Ascending aorta (tissue), 2 donors: ENCODE measurements at regions of chr2 and their contacts with region 1.

Region 1: DNA sequence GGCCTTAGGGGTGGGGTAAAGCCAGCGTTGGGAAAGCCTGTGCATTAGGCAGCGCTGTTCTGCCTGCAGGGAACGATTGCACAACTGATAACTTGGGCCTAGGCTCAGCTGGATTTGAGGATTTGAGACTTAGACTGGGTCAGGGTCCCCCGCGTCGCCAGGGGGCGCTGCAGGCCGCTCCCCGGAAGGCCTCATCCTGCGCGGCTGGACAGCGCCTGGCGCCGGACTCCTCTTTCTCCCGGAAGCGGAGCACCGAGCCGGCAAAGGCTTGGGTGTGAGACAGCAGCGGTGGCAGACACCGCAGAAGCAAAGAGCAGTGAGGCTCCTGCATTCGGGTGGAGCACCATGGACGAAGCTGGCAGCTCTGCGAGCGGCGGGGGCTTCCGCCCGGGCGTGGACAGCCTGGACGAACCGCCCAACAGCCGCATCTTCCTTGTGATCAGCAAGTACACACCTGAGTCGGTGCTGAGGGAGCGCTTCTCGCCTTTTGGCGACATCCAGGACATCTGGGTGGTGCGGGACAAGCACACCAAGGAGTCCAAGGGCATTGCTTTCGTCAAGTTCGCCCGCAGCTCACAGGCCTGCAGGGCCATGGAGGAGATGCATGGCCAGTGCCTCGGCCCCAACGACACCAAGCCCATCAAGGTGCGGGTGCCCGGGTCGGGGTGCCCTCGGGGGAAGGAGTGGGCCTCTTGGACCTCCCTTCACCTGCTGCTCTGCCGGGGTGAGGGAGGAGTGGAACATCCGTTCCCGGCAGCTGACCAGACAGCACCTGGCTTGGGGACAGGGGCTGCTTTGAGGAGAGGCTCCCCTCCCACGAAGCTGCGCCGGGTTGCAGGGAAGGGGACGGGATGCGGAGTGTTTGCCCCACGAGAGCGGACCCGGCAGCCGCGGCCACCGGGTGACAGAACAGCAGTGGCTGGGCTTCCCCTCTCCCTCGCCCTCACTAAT is at the start of gene RBM45:
- DNase-seq: peak; percentile 54 to 96
- H3K4me3 ChIP-seq: peak within 1 kb of the TSS; percentile 84 to 94
- H3K27ac ChIP-seq: peak within 1 kb of the TSS; percentile 66 to 77
- H3K4me1 ChIP-seq: peaks cover 0 to 6% of the 10 kb centered on the region in 2 donors
- H3K27me3 ChIP-seq: no peaks in the 10 kb centered on the region
- CTCF ChIP-seq: peak; percentile 88 to 97 (median 94)
- total RNA-seq, gene RBM45: 2.8 TPM

Region 2: GRCh38 chr2:177740700-177741099 is 371.8 kb before region 1 on chr2:
- intact Hi-C with region 1: no loop called
- DNase-seq: no peak
- H3K4me3 ChIP-seq: no peak overlapping the region
- H3K27ac ChIP-seq: no peak overlapping the region
- H3K4me1 ChIP-seq: no peaks in the 10 kb centered on the region
- H3K27me3 ChIP-seq: no peaks in the 10 kb centered on the region
- CTCF ChIP-seq: no peak

Region 3: GRCh38 chr2:178280244-178280852 is 167.9 kb after region 1 on chr2:
- intact Hi-C with region 1: loop called (anchors 5 kb)
- DNase-seq: peak in 1 of 2 donors; percentile 65
- H3K4me3 ChIP-seq: no peak overlapping the region
- H3K27ac ChIP-seq: no peak overlapping the region
- H3K4me1 ChIP-seq: no peaks in the 10 kb centered on the region
- H3K27me3 ChIP-seq: no peaks in the 10 kb centered on the region
- CTCF ChIP-seq: peak; percentile 56 to 77 (median 76)

Region 4: DNA sequence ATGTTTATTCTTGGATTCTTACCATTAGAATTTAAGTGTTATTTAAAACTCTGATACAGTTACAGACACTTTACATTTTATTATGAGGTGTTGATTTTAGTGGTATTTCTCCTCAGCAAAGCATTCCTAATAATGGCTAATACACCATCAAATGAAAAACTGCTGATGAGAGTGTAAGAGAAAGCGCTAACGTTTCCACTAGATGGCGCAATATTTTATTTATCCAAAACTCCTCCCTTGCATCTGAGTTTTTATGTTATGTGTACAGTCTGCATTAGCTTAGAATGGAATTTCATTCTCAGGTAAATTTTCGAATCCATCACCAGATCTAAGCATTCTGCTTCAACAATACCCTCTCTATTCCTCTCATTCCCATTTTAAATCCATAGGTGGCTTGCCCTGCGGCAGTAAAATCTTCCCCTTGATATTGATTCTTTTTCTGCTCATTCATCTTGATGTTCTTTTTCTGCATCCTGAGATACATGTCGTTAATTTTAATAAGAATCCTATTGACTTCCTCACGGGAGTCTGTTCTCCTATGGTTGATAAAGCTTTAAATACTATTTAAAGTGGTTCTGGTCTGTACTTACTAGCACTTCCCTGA is 284.6 kb after region 1 on chr2:
- intact Hi-C with region 1: loop called (anchors 5 kb)
- DNase-seq: no peak
- H3K4me3 ChIP-seq: no peak overlapping the region
- H3K27ac ChIP-seq: no peak overlapping the region
- H3K4me1 ChIP-seq: no peaks in the 10 kb centered on the region
- H3K27me3 ChIP-seq: no peaks in the 10 kb centered on the region
- CTCF ChIP-seq: peak; percentile 12 to 53 (median 45)